Activated CD4-positive, alpha-beta T cell treated with anti-CD3 and anti-CD28 coated beads for 36 hours (primary cell): ENCODE measurements at regions of chr5 and their contacts with region 1.

Region 1: GRCh38 chr5:142699184-142699720 is 13.4 kb upstream of the FGF1 start:
- DNase-seq: peak; percentile 88
- ATAC-seq: peak; percentile 94
- H3K4me3 Mint-ChIP-seq: no peak overlapping the region
- H3K27ac Mint-ChIP-seq: no peak overlapping the region
- H3K4me1 Mint-ChIP-seq: no peaks in the 10 kb centered on the region
- H3K27me3 Mint-ChIP-seq: no peaks in the 10 kb centered on the region

Region 2: DNA sequence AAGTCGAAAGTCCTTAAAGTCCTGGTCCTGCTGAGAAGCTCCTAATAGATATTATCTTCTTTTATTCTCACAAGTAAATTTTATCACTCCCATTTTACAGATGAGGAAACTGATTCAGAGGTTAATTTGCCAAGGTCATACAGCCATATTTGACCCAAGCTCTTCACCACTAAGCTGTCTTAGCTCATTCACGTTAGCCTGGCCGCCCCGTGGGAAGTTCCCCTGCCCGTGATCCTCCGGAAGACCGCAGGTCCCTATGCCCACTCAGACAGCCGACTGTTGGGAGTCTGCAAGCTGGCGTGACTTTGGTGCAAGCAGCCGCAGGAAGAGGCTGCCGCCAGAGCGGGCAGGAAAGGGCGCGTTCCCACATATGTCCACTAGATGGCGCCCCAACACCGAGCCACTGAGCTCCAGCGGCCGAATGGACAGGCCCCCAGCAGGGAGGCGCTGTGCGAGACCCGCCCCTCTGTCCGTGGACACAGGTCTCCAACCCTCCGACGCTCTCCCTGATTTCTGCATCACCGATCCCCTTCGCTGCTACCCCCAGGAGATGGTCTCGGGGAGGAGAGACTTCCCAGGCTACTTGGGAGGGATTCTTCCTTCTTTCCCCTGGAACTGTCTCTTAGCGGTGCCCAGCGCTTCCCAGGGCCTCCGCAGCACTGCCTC is 1007.3 kb before region 1 on chr5:
- CTCF ChIA-PET with region 1: no interaction called
- POLR2A ChIA-PET with region 1: no interaction called
- intact Hi-C with region 1: loop called in 1 of 2 experiments (anchors 5 kb)
- DNase-seq: peak; percentile 93
- ATAC-seq: peak; percentile 71
- H3K4me3 Mint-ChIP-seq: peak overlapping the region; percentile 64
- H3K27ac Mint-ChIP-seq: peak overlapping the region; percentile 55
- H3K4me1 Mint-ChIP-seq: peaks cover 25% of the 10 kb centered on the region
- H3K27me3 Mint-ChIP-seq: peaks cover 4% of the 10 kb centered on the region

Region 3: GRCh38 chr5:142151436-142152383 is 547.5 kb before region 1 on chr5:
- CTCF ChIA-PET with region 1: interaction called, 3 read pairs
- POLR2A ChIA-PET with region 1: no interaction called
- intact Hi-C with region 1: loop called in 1 of 2 experiments (anchors 1 kb)
- DNase-seq: peak; percentile 68
- ATAC-seq: peak; percentile 77
- H3K4me3 Mint-ChIP-seq: no peak overlapping the region
- H3K27ac Mint-ChIP-seq: no peak overlapping the region
- H3K4me1 Mint-ChIP-seq: peaks cover 16% of the 10 kb centered on the region
- H3K27me3 Mint-ChIP-seq: no peaks in the 10 kb centered on the region

Region 4: DNA sequence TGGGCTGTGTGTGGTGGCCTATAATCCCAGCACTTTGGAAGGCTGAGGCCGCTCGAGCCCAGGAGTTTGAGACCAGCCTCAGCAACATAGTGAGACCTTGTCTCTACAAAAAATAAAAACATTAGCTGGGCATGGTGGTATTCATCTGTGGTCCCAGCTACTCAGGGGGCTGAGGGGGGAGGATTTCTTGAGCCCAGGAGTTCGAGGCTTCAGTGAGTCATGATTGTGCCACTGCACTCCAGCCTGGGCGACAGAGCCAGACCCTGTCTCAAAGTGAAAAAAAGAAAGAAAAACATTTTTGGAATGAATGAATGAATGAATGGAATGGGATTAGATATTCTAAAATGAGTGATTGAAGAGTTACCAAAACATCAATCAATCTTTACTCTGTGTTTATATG is 99.2 kb before region 1 on chr5:
- CTCF ChIA-PET with region 1: interaction called, 11 read pairs
- POLR2A ChIA-PET with region 1: no interaction called
- intact Hi-C with region 1: no loop called
- DNase-seq: no peak
- ATAC-seq: no peak
- H3K4me3 Mint-ChIP-seq: no peak overlapping the region
- H3K27ac Mint-ChIP-seq: no peak overlapping the region
- H3K4me1 Mint-ChIP-seq: peaks cover 8% of the 10 kb centered on the region
- H3K27me3 Mint-ChIP-seq: peaks cover 9% of the 10 kb centered on the region

Region 5: GRCh38 chr5:142611154-142611553 is 88.1 kb before region 1 on chr5:
- CTCF ChIA-PET with region 1: interaction called, 22 read pairs
- POLR2A ChIA-PET with region 1: no interaction called
- intact Hi-C with region 1: loop called (anchors 1 kb)
- DNase-seq: peak; percentile 85
- ATAC-seq: peak; percentile 97
- H3K4me3 Mint-ChIP-seq: no peak overlapping the region
- H3K27ac Mint-ChIP-seq: no peak overlapping the region
- H3K4me1 Mint-ChIP-seq: no peaks in the 10 kb centered on the region
- H3K27me3 Mint-ChIP-seq: peaks cover 12% of the 10 kb centered on the region

Region 6: GRCh38 chr5:142644640-142645361 is 54.5 kb before region 1 on chr5:
- CTCF ChIA-PET with region 1: interaction called, 12 read pairs
- POLR2A ChIA-PET with region 1: no interaction called
- intact Hi-C with region 1: no loop called
- DNase-seq: no peak
- ATAC-seq: peak; percentile 36
- H3K4me3 Mint-ChIP-seq: no peak overlapping the region
- H3K27ac Mint-ChIP-seq: no peak overlapping the region
- H3K4me1 Mint-ChIP-seq: peaks cover 3% of the 10 kb centered on the region
- H3K27me3 Mint-ChIP-seq: peaks cover 12% of the 10 kb centered on the region

Region 7: DNA sequence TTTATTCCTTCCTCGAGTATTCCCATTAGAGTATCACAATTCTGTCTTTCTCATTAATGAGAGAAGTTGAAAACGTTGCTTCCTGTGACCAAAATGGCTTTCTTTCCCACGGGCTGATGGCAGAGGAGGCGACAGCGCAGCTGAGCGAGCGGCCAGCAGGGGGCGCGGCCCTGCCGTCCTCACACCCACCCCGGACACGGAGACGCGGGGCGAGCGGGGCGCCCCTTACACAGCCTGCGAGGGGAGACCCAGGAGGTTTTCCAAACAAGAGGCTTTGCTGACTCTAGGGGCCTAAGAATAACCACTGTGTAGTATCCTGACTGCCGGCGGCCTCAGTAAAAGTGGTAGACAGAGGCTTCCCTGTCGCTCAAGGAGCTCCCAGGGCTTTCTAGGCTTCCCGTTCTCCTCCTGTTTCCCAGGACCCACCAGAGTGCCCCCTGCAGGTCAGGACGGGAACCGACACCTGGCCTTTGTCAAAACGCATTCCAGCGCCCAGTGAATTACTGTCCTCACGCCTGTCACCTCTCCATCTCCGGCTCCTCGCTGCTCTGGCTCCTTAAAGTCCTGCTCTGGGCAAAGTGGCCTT is 14.0 kb after region 1 on chr5:
- CTCF ChIA-PET with region 1: interaction called, 40 read pairs
- POLR2A ChIA-PET with region 1: no interaction called
- intact Hi-C with region 1: no loop called
- DNase-seq: peak; percentile 92
- ATAC-seq: peak; percentile 95
- H3K4me3 Mint-ChIP-seq: peak overlapping the region; percentile 64
- H3K27ac Mint-ChIP-seq: no peak overlapping the region
- H3K4me1 Mint-ChIP-seq: peaks cover 3% of the 10 kb centered on the region
- H3K27me3 Mint-ChIP-seq: no peaks in the 10 kb centered on the region

Region 8: DNA sequence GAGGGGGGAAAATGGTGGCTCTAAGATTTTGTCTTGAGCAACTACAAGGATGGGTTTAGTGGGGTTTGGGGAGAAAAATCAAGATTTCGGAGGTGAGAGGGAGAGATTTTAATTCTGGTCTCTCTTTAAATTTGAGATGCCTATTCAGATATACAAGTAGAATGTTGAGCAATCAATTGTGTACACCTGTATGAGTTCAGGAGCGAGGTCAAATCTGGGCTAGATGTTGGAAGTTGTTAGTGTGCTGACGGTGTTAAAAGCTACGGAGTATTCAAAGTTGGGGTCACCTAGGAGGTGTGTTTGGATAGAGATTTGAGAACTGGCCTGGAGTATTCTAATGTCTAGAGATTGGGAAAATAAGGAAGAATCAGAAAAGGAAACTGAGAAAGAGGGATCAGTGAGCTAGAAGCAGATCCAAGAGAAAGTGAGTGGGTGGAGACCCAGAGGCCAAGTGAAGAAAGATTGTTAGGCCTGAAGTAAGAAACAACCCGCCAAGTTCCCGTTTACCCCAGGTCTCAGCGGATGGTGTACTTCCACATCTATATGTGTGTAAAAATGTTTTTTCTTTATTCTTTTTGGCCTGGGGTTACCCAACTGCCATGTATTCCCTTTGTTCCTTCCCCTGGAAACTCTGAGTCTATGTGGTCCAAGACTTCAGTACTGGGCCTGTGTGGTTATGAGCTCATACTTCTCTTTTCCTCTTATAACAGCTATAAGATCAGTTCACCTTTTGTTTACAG is 59.0 kb after region 1 on chr5:
- CTCF ChIA-PET with region 1: no interaction called
- POLR2A ChIA-PET with region 1: no interaction called
- intact Hi-C with region 1: no loop called
- DNase-seq: no peak
- ATAC-seq: peak; percentile 80
- H3K4me3 Mint-ChIP-seq: no peak overlapping the region
- H3K27ac Mint-ChIP-seq: peak overlapping the region; percentile 2
- H3K4me1 Mint-ChIP-seq: peaks cover 16% of the 10 kb centered on the region
- H3K27me3 Mint-ChIP-seq: no peaks in the 10 kb centered on the region